ENCODE measurements at regions of chr20 and their contacts with region 1.

Region 1: GRCh38 chr20:35146920-35147574 is at the start of gene EDEM2:
- DNase-seq: peak; percentile 96
- CTCF ChIP-seq: no peak

Region 2: DNA sequence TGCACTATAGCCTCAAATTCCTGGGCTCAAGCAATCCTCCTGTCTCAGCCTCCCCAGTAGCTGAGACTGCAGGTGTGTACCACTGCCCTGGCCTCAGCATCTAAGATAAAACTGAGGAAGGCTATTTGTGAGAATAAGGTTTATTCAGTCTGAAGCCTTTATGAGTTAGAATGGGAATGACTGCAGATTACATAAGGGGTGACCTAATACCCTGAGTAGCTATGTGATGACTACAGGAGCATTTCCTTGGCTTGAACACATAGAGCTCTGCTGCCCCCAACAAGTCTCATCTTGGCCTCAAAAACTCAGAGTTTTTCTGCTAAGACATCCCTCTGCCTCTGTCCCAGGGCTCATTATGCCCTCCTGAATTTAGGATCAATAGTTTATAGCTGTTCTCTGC is 199.0 kb before region 1 on chr20:
- CTCF ChIA-PET with region 1: no interaction called
- POLR2A ChIA-PET with region 1: no interaction called
- DNase-seq: no peak
- CTCF ChIP-seq: no peak

Region 3: DNA sequence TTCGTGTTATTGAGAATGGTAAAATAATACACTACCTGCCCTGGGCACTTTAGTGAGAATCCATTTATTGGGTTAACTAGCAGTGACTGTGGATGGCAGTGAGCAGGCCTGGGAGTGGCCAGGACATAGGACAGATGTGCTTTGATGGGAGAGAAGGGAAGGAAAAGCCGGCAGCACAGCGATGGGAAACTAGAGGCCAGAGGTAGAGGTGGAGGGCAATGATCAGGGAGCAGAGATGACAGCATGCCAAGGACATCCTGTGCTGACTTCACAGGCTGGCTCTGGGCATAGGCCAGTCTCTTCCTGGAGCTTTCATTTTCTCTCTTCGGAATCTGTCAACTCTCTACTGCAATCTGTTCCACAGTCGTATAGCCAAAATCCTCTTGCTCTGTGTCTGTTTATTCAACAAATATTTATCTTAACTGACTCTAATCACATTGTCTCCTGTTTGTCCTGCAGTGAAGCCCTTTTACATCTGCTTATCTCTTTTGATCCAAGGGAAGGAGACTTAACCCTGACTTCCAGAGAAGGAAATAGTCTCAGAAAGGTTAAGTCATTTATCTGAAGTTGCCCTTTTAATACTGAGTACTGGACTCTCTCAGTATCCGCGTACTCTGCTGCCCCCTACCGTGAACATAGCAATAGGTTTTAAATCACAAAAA is 61.0 kb after region 1 on chr20:
- CTCF ChIA-PET with region 1: interaction called, 11 read pairs
- POLR2A ChIA-PET with region 1: no interaction called
- DNase-seq: peak; percentile 67
- CTCF ChIP-seq: peak; percentile 62